PC-9 (cell line): ENCODE measurements at regions of chr11 and their contacts with region 1.

Region 1: GRCh38 chr11:61792310-61793085 is at the starts of genes FEN1 and TMEM258:
- DNase-seq: peak; percentile 89 to 90
- H3K4me3 ChIP-seq: peak within 1 kb of the TSS; percentile 72
- H3K27ac ChIP-seq: peak within 1 kb of the TSS; percentile 81
- H3K4me1 ChIP-seq: peaks cover 20% of the 10 kb centered on the region
- H3K27me3 ChIP-seq: no peaks in the 10 kb centered on the region
- CTCF ChIP-seq: no peak; the same call in 1 of the 2 replicates
- total RNA-seq, gene FEN1: 56.5 and 60.9 TPM in 2 replicates
- total RNA-seq, gene TMEM258: 141 and 217 TPM in 2 replicates

Region 2: DNA sequence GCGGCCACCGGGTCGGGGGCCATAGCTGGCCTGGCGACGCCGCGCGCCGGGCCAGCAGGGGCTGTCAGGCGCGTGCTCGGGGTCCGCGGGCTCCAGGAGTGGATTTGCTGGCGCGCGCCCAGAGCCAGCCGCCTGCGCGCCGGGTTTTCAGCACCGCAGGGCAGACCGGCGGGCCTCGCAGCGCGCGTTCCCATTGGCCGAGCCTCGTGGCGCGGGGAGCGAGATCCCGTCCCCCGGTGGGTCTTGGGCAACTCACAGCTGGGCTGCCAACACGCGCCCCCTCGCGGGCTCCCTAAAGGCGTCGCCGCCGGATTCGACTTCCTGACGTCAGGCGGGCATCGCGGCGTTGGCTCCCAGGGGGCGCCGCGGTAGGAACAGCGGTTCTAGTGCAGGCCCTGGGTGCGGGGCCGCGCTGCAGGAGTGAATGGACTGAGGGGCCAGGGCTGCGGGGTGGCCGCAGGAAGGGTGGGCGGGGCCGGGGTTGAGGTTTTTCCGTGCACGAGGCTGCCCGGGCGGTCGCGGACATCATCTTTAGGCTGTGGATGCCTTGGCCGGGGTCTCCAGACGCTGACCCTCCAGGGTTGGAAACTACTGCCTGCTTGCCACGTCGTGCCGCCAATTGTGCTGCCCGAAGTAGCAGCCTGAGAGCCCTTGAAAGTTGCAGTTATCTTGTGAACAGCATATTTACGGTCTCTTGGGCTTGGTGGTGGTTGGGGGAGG is 24.4 kb after region 1 on chr11 and contains the start of gene FADS1:
- CTCF ChIA-PET with region 1: interaction called, 13 read pairs
- POLR2A ChIA-PET with region 1: interaction called, 18 read pairs
- intact Hi-C with region 1: no loop called
- DNase-seq: peak; percentile 88 to 96
- H3K4me3 ChIP-seq: peak within 1 kb of the TSS; percentile 95
- H3K27ac ChIP-seq: peak within 1 kb of the TSS; percentile 80
- H3K4me1 ChIP-seq: peaks cover 42% of the 10 kb centered on the region
- H3K27me3 ChIP-seq: no peaks in the 10 kb centered on the region
- CTCF ChIP-seq: peak; percentile 71
- total RNA-seq, gene FADS1: 114 and 150 TPM in 2 replicates

Region 3: DNA sequence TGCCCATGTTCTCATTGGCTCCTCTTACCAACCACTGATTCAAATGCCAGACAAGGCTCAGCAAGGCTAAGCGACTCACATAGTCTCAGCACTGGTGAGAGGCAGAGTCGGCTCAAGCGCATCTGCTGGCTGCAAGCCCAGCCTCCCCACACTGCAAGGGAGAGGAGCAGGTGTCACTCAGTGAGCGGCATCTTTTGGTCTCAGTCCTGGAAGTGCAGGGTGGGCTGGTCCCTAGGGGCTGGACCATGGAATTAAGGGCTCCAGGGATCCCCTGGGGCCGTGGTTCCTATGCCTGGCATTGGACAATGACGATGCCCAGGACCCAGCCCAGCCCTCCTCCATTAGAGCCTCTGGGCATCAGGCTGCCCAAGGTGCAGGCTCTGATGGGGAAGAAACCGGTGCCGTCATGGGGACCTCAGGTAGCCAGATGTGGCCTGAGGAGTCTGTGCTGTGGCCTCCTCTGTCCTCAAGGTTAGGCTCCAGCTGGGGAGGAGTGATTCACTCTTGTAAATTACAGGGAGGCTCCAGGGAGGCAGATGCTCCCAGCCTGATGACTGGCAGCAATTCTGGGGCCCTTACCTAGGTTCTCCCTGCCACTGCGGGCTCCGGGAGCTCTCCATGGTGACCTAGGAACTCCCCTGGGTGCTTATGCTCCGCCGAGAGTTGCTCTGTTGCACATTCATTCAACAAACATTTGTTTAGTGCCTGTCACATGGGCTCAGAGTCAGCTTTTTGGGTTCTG is 63.6 kb after region 1 on chr11:
- CTCF ChIA-PET with region 1: no interaction called
- POLR2A ChIA-PET with region 1: no interaction called
- intact Hi-C with region 1: no loop called
- DNase-seq: no peak
- H3K4me3 ChIP-seq: no peak overlapping the region
- H3K27ac ChIP-seq: no peak overlapping the region
- H3K4me1 ChIP-seq: no peaks in the 10 kb centered on the region
- H3K27me3 ChIP-seq: no peaks in the 10 kb centered on the region
- CTCF ChIP-seq: no peak

Region 4: DNA sequence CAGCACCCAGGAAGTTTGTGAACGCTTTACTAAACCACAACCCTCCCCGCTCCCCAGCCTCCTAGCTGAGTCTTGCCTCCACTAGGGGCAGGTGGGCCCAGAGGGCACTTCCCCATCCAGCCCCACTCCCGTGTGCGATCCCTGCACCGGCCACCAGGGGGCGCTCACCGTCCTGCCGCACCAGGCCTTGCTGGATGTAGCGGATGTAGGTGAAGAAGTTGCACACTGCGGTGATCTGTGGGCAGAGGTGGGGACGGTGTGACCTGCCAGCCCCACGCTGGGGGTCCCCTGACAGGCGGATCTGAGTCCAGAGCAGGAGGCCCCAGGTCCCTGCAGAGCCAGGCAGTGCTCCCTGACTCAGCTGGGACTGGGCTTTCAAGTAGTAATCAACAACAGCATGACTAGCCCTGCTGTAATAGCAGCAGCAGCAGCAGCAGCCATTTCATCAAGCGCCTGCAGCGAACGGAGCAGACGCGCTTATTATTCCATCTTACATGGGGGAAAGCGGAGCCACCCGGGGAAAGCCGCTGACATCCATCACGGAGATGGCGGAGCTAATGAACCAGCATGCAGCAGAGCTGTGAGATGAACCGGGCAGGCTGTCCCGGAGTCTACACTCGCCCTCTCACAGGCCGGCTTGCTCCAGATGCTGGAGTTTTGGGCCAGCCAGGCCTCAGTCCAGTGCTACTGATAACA is 106.8 kb after region 1 on chr11:
- CTCF ChIA-PET with region 1: no interaction called
- POLR2A ChIA-PET with region 1: no interaction called
- intact Hi-C with region 1: loop called (anchors 1 kb)
- DNase-seq: peak; percentile 73 to 90
- H3K4me3 ChIP-seq: no peak overlapping the region
- H3K27ac ChIP-seq: no peak overlapping the region
- H3K4me1 ChIP-seq: no peaks in the 10 kb centered on the region; the same call in 1 of the 2 replicates
- H3K27me3 ChIP-seq: no peaks in the 10 kb centered on the region
- CTCF ChIP-seq: peak; percentile 100

Region 5: GRCh38 chr11:62054484-62055121 is 262.1 kb after region 1 on chr11:
- CTCF ChIA-PET with region 1: no interaction called
- POLR2A ChIA-PET with region 1: no interaction called
- intact Hi-C with region 1: loop called (anchors 10 kb)
- DNase-seq: peak; percentile 80 to 95
- H3K4me3 ChIP-seq: no peak overlapping the region; the same call in 1 of the 2 replicates
- H3K27ac ChIP-seq: peak overlapping the region; percentile 85
- H3K4me1 ChIP-seq: peaks cover 53% of the 10 kb centered on the region
- H3K27me3 ChIP-seq: no peaks in the 10 kb centered on the region
- CTCF ChIP-seq: peak; percentile 89

Region 6: GRCh38 chr11:62108017-62108750 is 315.7 kb after region 1 on chr11:
- CTCF ChIA-PET with region 1: interaction called, 13 read pairs
- POLR2A ChIA-PET with region 1: no interaction called
- intact Hi-C with region 1: loop called (anchors 2 kb)
- DNase-seq: peak; percentile 44 to 53
- H3K4me3 ChIP-seq: no peak overlapping the region
- H3K27ac ChIP-seq: no peak overlapping the region
- H3K4me1 ChIP-seq: no peaks in the 10 kb centered on the region
- H3K27me3 ChIP-seq: no peaks in the 10 kb centered on the region
- CTCF ChIP-seq: peak; percentile 93

Region 7: DNA sequence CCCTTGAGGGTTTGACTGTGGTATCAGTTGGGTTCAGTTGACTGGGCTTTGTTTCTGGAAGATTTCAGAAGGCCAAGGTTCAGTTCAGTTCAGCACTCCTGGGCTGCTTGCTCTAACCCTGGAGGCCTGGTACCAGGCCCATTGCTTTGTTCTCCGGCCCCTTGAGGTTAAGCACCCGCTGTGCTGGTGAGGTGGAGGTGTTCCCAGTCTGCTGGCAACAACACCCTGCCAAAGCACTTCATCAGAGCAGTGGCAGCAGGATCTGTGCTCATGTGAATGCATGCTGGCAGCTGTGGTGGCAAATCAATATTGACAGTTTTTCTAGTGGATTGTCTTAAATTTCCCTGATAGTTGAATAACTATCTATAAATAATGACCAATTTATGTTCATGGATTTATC is 393.7 kb after region 1 on chr11:
- CTCF ChIA-PET with region 1: no interaction called
- POLR2A ChIA-PET with region 1: no interaction called
- intact Hi-C with region 1: no loop called
- DNase-seq: no peak
- H3K4me3 ChIP-seq: no peak overlapping the region
- H3K27ac ChIP-seq: no peak overlapping the region
- H3K4me1 ChIP-seq: no peaks in the 10 kb centered on the region
- H3K27me3 ChIP-seq: peaks cover 97% of the 10 kb centered on the region
- CTCF ChIP-seq: no peak

Region 8: DNA sequence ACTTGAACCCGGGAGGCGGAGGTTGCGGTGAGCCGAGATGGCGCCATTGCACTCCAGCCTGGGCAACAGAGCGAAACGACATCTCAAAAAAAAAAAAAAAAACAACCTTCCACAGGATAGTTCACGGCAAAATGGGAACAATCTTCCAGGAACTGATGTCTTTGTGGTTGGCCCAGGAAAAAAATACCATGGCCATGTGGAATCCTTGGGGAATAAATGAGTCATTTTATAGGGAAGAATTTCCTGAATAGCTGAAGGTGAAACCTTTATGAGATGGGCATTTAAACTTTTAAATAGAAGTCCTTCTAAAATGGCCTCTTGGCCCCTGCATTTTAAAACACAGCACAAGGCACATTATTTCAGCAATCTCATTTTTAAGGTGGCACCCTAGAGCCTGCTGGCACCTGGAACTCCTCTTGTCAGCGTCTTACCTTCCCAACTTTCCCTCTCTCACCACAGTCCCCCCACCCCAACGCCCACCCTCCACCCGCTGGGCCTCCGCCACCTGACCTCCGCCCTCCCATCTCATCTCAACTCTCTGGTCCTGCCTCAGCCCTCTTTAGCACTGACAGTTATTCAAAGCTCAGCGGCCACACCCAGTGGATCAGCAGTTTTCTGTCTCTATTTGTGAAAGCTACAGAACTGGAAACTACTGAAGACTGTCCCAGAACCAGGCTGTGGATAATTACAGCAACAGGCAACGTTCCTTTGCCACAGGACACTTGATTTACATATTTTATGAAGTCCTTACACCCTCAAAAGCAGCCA is 669.4 kb after region 1 on chr11:
- CTCF ChIA-PET with region 1: no interaction called
- POLR2A ChIA-PET with region 1: interaction called, 11 read pairs
- intact Hi-C with region 1: no loop called
- DNase-seq: no peak
- H3K4me3 ChIP-seq: no peak overlapping the region
- H3K27ac ChIP-seq: no peak overlapping the region
- H3K4me1 ChIP-seq: peaks cover 22% of the 10 kb centered on the region
- H3K27me3 ChIP-seq: no peaks in the 10 kb centered on the region
- CTCF ChIP-seq: no peak